CD4-positive, alpha-beta T cell (primary cell): ENCODE measurements at regions of chr12 and their contacts with region 1.

Region 1: GRCh38 chr12:3947781-3948180 is 74.6 kb upstream of the PARP11 start:
- DNase-seq: peak in 3 of 14 experiments; percentile 74 to 84 (median 78)
- ATAC-seq: peak; percentile 77
- H3K4me3 ChIP-seq: no peak overlapping the region
- H3K4me3 Mint-ChIP-seq: peak overlapping the region; percentile 52
- H3K27ac ChIP-seq: peak overlapping the region; percentile 84 to 86
- H3K27ac Mint-ChIP-seq: peak overlapping the region; percentile 98
- H3K4me1 ChIP-seq: peaks cover 53% of the 10 kb centered on the region
- H3K4me1 Mint-ChIP-seq: peaks cover 67% of the 10 kb centered on the region
- H3K27me3 ChIP-seq: no peaks in the 10 kb centered on the region
- H3K27me3 Mint-ChIP-seq: no peaks in the 10 kb centered on the region
- CTCF ChIP-seq: no peak

Region 2: DNA sequence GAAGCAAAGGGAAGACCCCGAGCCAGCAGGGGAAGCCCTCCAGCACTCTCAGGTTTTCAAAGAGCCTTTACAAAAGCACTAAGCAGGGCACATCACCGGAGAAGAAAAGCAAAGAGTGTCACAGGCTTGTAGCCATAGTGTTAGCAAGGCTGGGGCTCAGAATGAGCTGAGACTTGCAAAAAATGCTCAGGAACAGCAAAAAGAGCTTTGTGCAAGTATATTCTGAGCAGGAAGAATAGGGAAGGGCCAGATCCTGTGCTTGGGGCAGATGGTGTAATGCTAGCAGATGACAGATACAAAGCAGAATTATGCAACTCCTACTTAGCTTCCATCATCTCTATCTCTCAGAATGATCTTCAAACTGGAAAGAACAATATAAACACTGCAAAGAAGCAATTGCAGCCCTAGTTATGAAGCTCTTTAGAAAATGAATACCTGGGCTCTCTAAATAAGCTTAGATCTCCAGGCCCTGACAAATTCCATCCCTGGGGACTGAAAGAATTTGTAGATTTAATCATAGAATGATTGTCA is 50.9 kb before region 1 on chr12:
- CTCF ChIA-PET with region 1: no interaction called
- POLR2A ChIA-PET with region 1: interaction called, 34 read pairs
- intact Hi-C with region 1: loop called in 1 of 2 experiments (anchors 1 kb)
- DNase-seq: peak in 3 of 14 experiments; percentile 36 to 43 (median 42)
- ATAC-seq: peak; percentile 33
- H3K4me3 ChIP-seq: peak overlapping the region; percentile 33
- H3K4me3 Mint-ChIP-seq: peak overlapping the region; percentile 76
- H3K27ac ChIP-seq: peak overlapping the region; percentile 69 to 87
- H3K27ac Mint-ChIP-seq: no peak overlapping the region
- H3K4me1 ChIP-seq: peaks cover 78% of the 10 kb centered on the region
- H3K4me1 Mint-ChIP-seq: peaks cover 48% of the 10 kb centered on the region
- H3K27me3 ChIP-seq: no peaks in the 10 kb centered on the region
- H3K27me3 Mint-ChIP-seq: no peaks in the 10 kb centered on the region
- CTCF ChIP-seq: no peak

Region 3: DNA sequence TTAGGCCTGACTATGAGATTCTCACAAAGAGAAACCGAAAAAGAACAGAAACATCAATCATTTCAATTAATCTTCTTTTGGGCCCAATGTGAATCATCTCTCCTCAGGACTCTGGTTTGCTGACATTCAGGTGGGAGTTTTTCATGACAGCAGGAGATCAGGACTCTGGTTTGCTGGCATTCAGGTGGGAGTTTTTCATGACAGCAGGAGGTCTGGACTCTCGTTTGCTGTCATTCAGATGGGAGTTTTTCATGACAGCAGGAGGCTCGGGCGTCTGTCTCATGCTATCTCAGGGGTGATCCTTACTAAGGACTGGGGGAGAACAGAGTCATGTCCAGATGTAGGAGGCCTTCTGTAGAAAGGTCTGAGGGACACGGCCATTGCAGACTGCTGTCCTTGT is 34.5 kb before region 1 on chr12:
- CTCF ChIA-PET with region 1: interaction called, 4 read pairs
- POLR2A ChIA-PET with region 1: interaction called, 10 read pairs
- intact Hi-C with region 1: no loop called
- DNase-seq: no peak
- ATAC-seq: no peak
- H3K4me3 ChIP-seq: no peak overlapping the region
- H3K4me3 Mint-ChIP-seq: no peak overlapping the region
- H3K27ac ChIP-seq: no peak overlapping the region
- H3K27ac Mint-ChIP-seq: peak overlapping the region; percentile 57
- H3K4me1 ChIP-seq: peaks cover 1% of the 10 kb centered on the region
- H3K4me1 Mint-ChIP-seq: peaks cover 28% of the 10 kb centered on the region
- H3K27me3 ChIP-seq: no peaks in the 10 kb centered on the region
- H3K27me3 Mint-ChIP-seq: no peaks in the 10 kb centered on the region
- CTCF ChIP-seq: no peak

Region 4: DNA sequence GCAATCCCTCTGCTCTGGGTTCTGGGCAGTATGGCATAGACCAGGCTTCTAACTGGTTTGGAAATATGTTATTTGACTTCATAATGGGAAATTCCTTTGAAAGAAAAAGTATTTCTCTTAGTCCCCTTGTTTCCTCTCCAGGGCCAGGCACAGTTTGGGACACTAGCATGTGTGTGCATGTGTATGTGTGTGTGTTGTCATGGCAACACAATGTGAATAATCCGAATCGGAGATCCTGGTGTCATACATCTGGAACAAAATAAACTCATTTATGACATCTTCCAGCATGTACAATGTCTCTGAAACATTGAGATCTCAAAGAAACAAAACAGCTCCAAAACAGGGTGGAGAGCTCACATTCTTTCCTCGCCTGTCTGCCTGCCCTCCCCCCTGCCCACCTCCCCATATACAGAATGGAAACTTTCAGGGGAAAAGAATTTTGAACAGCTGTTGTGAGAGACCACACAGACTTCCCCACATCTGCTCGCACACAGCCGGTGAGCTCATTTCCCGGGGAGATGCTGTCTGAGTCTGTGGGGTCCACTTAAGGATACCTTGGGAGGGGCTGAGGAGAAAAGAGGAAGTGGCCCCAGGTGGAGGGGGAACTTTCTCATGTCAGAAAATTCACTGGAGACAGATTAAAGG is 19.1 kb before region 1 on chr12:
- CTCF ChIA-PET with region 1: interaction called, 6 read pairs
- POLR2A ChIA-PET with region 1: interaction called, 31 read pairs
- intact Hi-C with region 1: loop called in 1 of 2 experiments (anchors 2 kb)
- DNase-seq: no peak
- ATAC-seq: no peak
- H3K4me3 ChIP-seq: no peak overlapping the region
- H3K4me3 Mint-ChIP-seq: no peak overlapping the region
- H3K27ac ChIP-seq: no peak overlapping the region
- H3K27ac Mint-ChIP-seq: peak overlapping the region; percentile 17
- H3K4me1 ChIP-seq: peaks cover 53% of the 10 kb centered on the region
- H3K4me1 Mint-ChIP-seq: peaks cover 72% of the 10 kb centered on the region
- H3K27me3 ChIP-seq: no peaks in the 10 kb centered on the region
- H3K27me3 Mint-ChIP-seq: no peaks in the 10 kb centered on the region
- CTCF ChIP-seq: no peak

Region 5: DNA sequence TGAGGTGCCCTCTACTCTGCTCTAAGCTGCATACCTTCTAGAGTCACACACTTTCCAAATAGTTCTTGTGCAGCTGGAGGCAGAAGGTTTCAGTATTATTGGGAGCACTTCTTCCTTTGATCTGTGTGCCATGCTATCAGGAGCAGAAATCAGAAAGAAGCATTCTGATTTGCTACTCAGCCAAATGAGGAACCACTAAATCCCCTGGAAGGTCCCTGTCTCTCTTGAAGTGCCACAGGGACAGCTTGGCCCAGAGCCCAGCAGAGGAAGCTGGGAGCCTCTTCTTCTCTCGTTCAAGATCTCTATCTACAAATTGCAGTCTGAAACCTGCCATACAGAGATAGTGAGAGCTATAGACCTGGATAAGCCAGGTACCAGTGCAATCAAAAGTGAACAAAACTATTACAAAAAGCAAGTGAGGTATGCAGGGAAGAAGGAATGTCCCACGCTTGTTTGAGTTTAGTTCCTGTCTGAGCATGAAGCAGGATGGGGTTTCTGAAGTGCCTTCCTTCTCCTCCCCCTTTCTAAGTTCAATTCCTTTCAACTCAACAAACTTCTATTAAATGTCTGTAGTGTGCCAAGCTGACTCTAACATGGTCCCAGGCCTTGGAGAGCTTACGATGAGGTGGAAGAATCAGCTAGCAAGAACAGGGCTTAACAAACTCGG is 26.3 kb after region 1 on chr12:
- CTCF ChIA-PET with region 1: interaction called, 3 read pairs
- POLR2A ChIA-PET with region 1: interaction called, 30 read pairs
- intact Hi-C with region 1: no loop called
- DNase-seq: peak in 4 of 14 experiments; percentile 22 to 60 (median 54)
- ATAC-seq: peak; percentile 48
- H3K4me3 ChIP-seq: no peak overlapping the region
- H3K4me3 Mint-ChIP-seq: peak overlapping the region; percentile 17
- H3K27ac ChIP-seq: peak overlapping the region; percentile 38 to 60
- H3K27ac Mint-ChIP-seq: peak overlapping the region; percentile 84
- H3K4me1 ChIP-seq: peaks cover 49% of the 10 kb centered on the region
- H3K4me1 Mint-ChIP-seq: peaks cover 66% of the 10 kb centered on the region
- H3K27me3 ChIP-seq: no peaks in the 10 kb centered on the region
- H3K27me3 Mint-ChIP-seq: no peaks in the 10 kb centered on the region
- CTCF ChIP-seq: no peak

Region 6: GRCh38 chr12:3988519-3989448 is 41.0 kb after region 1 on chr12:
- CTCF ChIA-PET with region 1: no interaction called
- POLR2A ChIA-PET with region 1: interaction called, 15 read pairs
- intact Hi-C with region 1: no loop called
- DNase-seq: peak in 8 of 14 experiments; percentile 9 to 63 (median 45)
- ATAC-seq: peak; percentile 94
- H3K4me3 ChIP-seq: peak overlapping the region; percentile 10
- H3K4me3 Mint-ChIP-seq: peak overlapping the region; percentile 52
- H3K27ac ChIP-seq: peak overlapping the region; percentile 43 to 55
- H3K27ac Mint-ChIP-seq: peak overlapping the region; percentile 84
- H3K4me1 ChIP-seq: peaks cover 22% of the 10 kb centered on the region
- H3K4me1 Mint-ChIP-seq: peaks cover 36% of the 10 kb centered on the region
- H3K27me3 ChIP-seq: no peaks in the 10 kb centered on the region
- H3K27me3 Mint-ChIP-seq: no peaks in the 10 kb centered on the region
- CTCF ChIP-seq: no peak

Region 7: GRCh38 chr12:4118017-4118510 is 170.3 kb after region 1 on chr12:
- CTCF ChIA-PET with region 1: no interaction called
- POLR2A ChIA-PET with region 1: no interaction called
- intact Hi-C with region 1: no loop called
- DNase-seq: peak in 4 of 14 experiments; percentile 25 to 74 (median 60)
- ATAC-seq: peak; percentile 66
- H3K4me3 ChIP-seq: no peak overlapping the region
- H3K4me3 Mint-ChIP-seq: peak overlapping the region; percentile 70
- H3K27ac ChIP-seq: no peak overlapping the region
- H3K27ac Mint-ChIP-seq: peak overlapping the region; percentile 43
- H3K4me1 ChIP-seq: peaks cover 48% of the 10 kb centered on the region
- H3K4me1 Mint-ChIP-seq: peaks cover 49% of the 10 kb centered on the region
- H3K27me3 ChIP-seq: no peaks in the 10 kb centered on the region
- H3K27me3 Mint-ChIP-seq: no peaks in the 10 kb centered on the region
- CTCF ChIP-seq: no peak